ENCODE measurements at regions of chr12 and their contacts with region 1.

Region 1: DNA sequence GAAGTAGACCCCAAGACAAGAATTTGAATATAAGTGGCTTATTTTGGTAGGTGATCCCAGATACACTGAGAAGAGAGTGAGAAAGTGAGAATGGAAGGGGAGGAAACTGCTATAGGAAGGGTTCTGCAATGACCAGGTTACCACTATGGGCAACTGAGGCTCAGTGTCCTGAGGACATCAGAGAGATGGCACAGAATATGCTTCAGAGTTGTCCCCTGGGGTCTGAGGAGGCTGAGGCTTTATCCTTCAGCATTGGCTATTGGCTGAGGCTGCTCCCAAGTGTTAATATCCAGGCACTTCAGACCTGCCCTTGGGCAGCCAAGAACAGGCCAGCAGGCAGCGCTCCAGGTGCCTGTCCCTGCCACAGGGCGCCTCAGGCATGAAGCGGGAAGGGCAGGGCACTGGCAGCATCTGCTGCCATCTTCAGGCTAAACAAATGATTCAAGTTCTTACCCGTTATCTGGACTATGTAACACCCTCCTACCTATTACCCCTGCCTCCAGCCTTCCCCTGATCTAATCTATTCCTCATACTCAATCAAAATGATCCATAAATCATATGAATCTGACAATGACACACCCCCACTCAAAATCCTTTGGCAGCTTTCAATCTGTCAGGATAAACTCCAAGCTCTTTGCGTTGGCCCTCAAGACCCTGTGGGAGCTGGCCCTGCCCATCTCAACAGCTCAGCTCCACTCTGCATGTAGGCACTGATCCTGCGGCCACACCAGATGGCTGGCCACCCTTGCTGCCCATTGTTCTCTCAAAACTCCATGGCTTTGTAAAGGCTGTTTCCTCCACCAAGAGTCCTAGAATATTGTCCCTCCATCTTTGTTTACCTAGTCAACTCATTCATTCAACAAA is 42.4 kb downstream of the CKAP4 start:
- DNase-seq: peak; percentile 43
- H3K4me3 Mint-ChIP-seq: no peak overlapping the region
- H3K27ac Mint-ChIP-seq: peak overlapping the region; percentile 7
- H3K4me1 Mint-ChIP-seq: peaks cover 5% of the 10 kb centered on the region
- H3K27me3 Mint-ChIP-seq: peaks cover 24% of the 10 kb centered on the region
- CTCF ChIP-seq: peak; percentile 38

Region 2: GRCh38 chr12:105705765-105706164 is 499.7 kb before region 1 on chr12:
- CTCF ChIA-PET with region 1: no interaction called
- POLR2A ChIA-PET with region 1: no interaction called
- intact Hi-C with region 1: loop called (anchors 5 kb)
- DNase-seq: peak; percentile 56
- H3K4me3 Mint-ChIP-seq: no peak overlapping the region
- H3K27ac Mint-ChIP-seq: peak overlapping the region; percentile 73
- H3K4me1 Mint-ChIP-seq: peaks cover 6% of the 10 kb centered on the region
- H3K27me3 Mint-ChIP-seq: no peaks in the 10 kb centered on the region
- CTCF ChIP-seq: peak; percentile 74

Region 3: DNA sequence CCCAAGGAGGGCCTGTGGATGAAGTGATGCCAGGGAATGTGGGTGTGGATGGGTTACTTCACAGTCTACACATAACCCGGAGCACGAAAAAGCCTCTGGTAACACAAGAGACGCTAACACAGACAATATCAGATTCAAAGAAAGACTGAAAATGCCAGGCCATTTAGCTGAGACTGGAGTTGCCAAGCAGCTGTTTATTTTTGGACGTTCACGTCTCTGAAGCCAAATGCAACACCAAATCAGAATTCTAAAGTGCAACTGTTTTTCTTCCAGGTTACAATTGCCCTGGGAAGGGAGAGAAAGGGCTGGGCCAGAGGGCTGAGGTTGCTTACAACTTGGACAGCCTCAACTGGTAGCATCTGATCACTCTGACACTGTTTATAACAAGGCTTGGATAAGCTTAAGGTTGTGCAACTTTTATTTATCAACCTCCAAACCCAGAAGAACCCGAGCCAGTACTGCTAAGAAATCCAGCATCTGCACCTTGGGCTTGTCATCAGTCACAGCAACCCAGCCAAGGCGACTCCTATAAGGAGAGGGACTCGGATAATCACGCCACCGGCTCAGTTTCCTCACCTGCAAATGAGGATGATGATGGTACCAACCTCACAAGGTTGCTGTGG is 91.5 kb before region 1 on chr12:
- CTCF ChIA-PET with region 1: no interaction called
- POLR2A ChIA-PET with region 1: no interaction called
- intact Hi-C with region 1: no loop called
- DNase-seq: peak; percentile 61
- H3K4me3 Mint-ChIP-seq: no peak overlapping the region
- H3K27ac Mint-ChIP-seq: peak overlapping the region; percentile 88
- H3K4me1 Mint-ChIP-seq: peaks cover 46% of the 10 kb centered on the region
- H3K27me3 Mint-ChIP-seq: no peaks in the 10 kb centered on the region
- CTCF ChIP-seq: no peak

Region 4: GRCh38 chr12:106149096-106149784 is 56.2 kb before region 1 on chr12:
- CTCF ChIA-PET with region 1: interaction called, 12 read pairs
- POLR2A ChIA-PET with region 1: interaction called, 3 read pairs
- intact Hi-C with region 1: no loop called
- DNase-seq: peak; percentile 57
- H3K4me3 Mint-ChIP-seq: no peak overlapping the region
- H3K27ac Mint-ChIP-seq: no peak overlapping the region
- H3K4me1 Mint-ChIP-seq: no peaks in the 10 kb centered on the region
- H3K27me3 Mint-ChIP-seq: no peaks in the 10 kb centered on the region
- CTCF ChIP-seq: peak; percentile 60